Mammary epithelial cell (primary cell): ENCODE measurements at regions of chr1 and their contacts with region 1.

Region 1: GRCh38 chr1:151790071-151790940 is at the start of gene TDRKH:
- DNase-seq: peak; percentile 100
- H3K4me3 ChIP-seq: peak within 1 kb of the TSS; percentile 65 to 98 (median 72)
- H3K27ac ChIP-seq: no peak within 1 kb of the TSS
- H3K4me1 ChIP-seq: no peaks in the 10 kb centered on the region
- H3K27me3 ChIP-seq: no peaks in the 10 kb centered on the region
- CTCF ChIP-seq: peak in 1 of 2 donors; percentile 39
- total RNA-seq, gene TDRKH: 3.0 to 9.3 TPM

Region 2: DNA sequence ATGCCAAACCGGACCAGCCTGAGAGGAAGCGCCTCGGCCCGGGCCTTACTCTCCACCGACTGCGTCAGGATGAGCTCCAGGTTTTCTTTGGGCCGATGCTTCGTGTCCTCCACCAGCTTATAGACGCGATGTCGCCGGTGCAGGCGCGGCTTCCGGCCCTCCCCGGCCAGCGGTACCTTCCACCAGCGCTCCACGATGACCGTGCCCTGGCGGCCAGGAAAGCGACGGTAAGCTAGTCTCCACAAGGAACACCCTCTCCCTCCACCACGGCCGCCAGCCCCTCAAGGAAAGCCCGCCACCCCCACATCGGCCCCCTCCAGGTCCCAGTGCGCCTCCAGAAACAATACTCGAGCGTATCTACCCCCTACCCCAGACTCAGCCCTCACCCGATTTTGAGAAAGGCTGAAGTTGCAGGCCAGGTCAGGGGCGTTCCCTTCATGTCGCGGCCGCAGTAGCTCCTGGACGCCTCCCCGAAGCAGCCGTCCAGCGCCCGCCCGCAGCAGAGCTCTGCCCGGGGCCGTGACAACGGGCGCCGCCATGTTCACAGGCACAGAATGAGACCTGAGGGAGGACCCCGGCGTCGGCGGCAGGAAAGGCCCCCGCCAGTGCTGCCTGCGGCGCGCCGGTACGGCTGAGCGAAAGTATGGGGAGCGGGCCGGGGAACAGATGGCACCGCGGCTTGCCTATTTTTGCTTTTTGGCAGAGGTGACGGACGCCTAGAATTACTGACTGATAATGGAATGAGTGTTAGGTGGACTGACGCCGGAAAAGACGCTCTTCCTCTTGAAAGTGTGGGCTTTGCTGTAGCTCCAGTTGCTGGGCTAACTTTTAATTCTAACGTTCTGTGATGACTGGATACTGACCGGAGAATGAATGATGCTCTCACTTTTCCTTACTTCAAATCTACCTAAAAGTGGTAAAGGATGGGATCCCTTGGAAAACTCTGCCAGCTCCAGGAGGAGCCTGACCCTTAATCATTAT is 27.1 kb before region 1 on chr1 and contains the start of gene MRPL9:
- CTCF ChIA-PET with region 1: interaction called, 6 read pairs
- dilution Hi-C with region 1: no loop called
- in situ Hi-C with region 1: no loop called
- intact Hi-C with region 1: loop called (anchors 1 kb)
- DNase-seq: peak; percentile 80
- H3K4me3 ChIP-seq: peak within 1 kb of the TSS; percentile 86 to 93 (median 89)
- H3K27ac ChIP-seq: peak within 1 kb of the TSS; percentile 85
- H3K4me1 ChIP-seq: peaks cover 19% of the 10 kb centered on the region
- H3K27me3 ChIP-seq: no peaks in the 10 kb centered on the region
- CTCF ChIP-seq: no peak
- total RNA-seq, gene MRPL9: 47.5 to 77.4 TPM

Region 3: GRCh38 chr1:151773702-151774101 is 16.6 kb before region 1 on chr1:
- CTCF ChIA-PET with region 1: no interaction called
- dilution Hi-C with region 1: no loop called
- in situ Hi-C with region 1: no loop called
- intact Hi-C with region 1: loop called (anchors 2 kb)
- DNase-seq: peak; percentile 96
- H3K4me3 ChIP-seq: no peak overlapping the region
- H3K27ac ChIP-seq: peak overlapping the region; percentile 70
- H3K4me1 ChIP-seq: peaks cover 14% of the 10 kb centered on the region
- H3K27me3 ChIP-seq: no peaks in the 10 kb centered on the region
- CTCF ChIP-seq: no peak

Region 4: GRCh38 chr1:151945725-151946364 is 155.5 kb after region 1 on chr1:
- CTCF ChIA-PET with region 1: no interaction called
- dilution Hi-C with region 1: no loop called
- in situ Hi-C with region 1: no loop called
- intact Hi-C with region 1: no loop called
- DNase-seq: peak; percentile 98
- H3K4me3 ChIP-seq: peak overlapping the region in 2 of 3 experiments; percentile 5 to 11
- H3K27ac ChIP-seq: peak overlapping the region; percentile 99
- H3K4me1 ChIP-seq: peaks cover 47% of the 10 kb centered on the region
- H3K27me3 ChIP-seq: no peaks in the 10 kb centered on the region
- CTCF ChIP-seq: no peak